Caco-2 (cell line): ENCODE measurements at regions of chr16 and their contacts with region 1.

Region 1: DNA sequence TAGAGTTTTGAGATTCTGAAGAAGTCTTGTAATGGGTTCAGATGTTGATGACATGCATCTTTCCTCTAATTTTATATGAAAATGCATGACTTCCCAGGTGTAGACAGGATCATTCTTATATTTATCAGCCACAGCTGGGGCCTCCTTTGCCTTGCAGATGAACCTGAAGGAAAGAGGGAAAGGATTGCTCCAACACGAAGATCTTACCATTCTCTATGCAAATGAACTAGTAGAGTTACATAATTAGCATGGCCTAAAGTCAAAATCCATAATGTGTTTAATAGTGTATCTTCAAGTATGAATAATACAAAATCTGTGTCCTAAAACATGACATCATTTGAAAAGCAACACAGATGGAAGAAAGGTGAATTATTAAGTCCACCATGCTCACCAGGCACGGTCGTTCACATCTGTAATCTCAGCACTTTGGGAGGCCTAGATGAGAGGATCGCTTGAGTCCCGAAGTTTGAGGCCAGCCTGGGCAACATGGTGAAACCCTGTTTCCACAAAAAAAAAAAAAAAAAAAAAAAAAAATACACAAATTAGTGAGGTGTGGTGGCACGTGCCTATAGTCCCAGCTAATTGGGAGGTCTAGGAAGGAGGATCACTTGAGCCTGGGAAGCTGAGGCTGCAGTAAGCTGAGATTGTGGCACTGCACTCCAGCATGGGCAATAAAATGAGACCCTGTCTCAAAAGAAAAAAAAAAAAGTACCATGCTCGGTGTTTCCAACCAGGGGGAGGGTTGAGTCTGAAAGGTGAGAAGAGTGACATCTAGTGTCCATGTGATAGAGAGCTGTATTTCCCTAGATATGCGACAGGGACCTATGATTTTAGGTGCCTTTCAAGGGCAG is 6.3 kb downstream of the VWA3A start:
- DNase-seq: peak in 1 of 2 experiments; percentile 61
- H3K4me3 ChIP-seq: no peak overlapping the region
- H3K4me3 Mint-ChIP-seq: peak overlapping the region; percentile 42
- H3K27ac Mint-ChIP-seq: no peak overlapping the region
- H3K4me1 ChIP-seq: no peaks in the 10 kb centered on the region
- H3K4me1 Mint-ChIP-seq: no peaks in the 10 kb centered on the region
- H3K27me3 ChIP-seq: no peaks in the 10 kb centered on the region
- H3K27me3 Mint-ChIP-seq: peaks cover 3% of the 10 kb centered on the region
- CTCF ChIP-seq: peak; percentile 50 to 77

Region 2: DNA sequence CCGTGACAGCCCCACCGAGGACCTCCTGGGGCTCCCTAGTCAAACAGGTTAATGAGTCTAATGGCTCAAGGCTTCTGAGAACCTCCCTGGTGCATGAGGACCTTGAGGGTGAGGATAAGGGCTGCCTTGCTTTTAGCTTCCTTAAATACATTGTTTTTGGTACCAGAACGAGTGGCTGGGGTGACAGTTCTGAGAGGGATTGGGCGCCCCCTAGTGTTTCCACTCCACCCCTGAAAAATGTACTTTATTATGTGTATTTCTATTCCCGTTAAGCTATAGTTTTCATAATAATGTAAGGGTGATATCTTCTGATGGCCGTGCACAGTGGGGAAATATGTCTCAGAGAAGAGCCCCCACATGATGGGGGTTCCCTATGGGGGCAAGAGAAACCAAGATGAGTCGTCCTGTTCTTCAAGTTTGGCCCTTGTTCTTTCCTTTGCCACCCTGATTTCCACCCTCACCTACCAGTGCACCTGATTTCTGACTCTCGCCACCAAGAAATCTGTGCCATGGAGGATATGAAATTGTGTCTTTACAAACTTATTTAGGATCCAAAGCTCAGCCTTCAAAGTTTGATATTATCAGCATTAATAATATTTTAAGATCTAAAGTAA is 20.8 kb before region 1 on chr16:
- CTCF ChIA-PET with region 1: interaction called, 18 read pairs
- POLR2A ChIA-PET with region 1: no interaction called
- intact Hi-C with region 1: no loop called
- DNase-seq: peak; percentile 49 to 70
- H3K4me3 ChIP-seq: no peak overlapping the region
- H3K4me3 Mint-ChIP-seq: no peak overlapping the region
- H3K27ac Mint-ChIP-seq: no peak overlapping the region
- H3K4me1 ChIP-seq: no peaks in the 10 kb centered on the region
- H3K4me1 Mint-ChIP-seq: no peaks in the 10 kb centered on the region
- H3K27me3 ChIP-seq: no peaks in the 10 kb centered on the region
- H3K27me3 Mint-ChIP-seq: no peaks in the 10 kb centered on the region
- CTCF ChIP-seq: peak; percentile 81 to 83

Region 3: DNA sequence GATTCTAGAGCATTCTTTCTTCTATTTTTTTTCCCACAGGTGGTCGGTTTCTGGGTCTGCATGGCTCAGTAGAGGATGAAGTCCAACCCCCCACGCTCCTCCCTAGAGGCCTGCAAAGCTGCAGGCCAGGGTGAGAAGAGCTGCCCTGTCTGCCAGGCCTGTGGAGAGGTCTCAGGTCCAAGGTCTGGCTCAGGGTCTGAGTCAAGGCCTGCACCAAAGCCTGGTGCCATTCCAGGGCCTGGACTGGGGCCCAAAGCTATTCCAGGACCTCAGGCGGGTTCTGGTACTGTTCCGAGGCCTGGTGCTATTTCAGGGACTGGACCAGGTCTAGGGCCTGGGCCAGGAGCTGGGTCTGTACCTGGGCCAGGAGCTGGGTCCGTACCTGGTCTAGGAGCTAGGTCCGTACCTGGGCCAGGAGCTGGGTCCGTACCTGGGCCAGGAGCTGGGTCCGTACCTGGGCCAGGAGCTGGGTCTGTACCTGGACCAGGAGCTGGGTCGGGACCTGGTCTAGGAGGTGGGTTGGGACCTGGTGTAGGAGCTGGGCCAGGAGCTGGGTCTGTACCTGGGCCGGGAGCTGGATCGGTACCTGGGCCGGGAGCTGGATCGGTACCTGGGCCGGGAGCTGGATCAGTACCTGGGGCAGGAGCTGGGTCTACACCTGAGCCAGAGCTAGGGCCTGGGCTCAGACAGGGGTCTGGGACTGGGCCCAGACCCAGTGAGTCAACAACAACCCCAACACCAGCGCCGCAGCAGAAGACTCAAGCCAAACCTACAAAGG is 67.1 kb after region 1 on chr16:
- CTCF ChIA-PET with region 1: no interaction called
- POLR2A ChIA-PET with region 1: no interaction called
- intact Hi-C with region 1: no loop called
- DNase-seq: no peak
- H3K4me3 ChIP-seq: no peak overlapping the region
- H3K4me3 Mint-ChIP-seq: no peak overlapping the region
- H3K27ac Mint-ChIP-seq: no peak overlapping the region
- H3K4me1 ChIP-seq: no peaks in the 10 kb centered on the region
- H3K4me1 Mint-ChIP-seq: no peaks in the 10 kb centered on the region
- H3K27me3 ChIP-seq: no peaks in the 10 kb centered on the region; the same call in 1 of the 2 replicates
- H3K27me3 Mint-ChIP-seq: peaks cover 6% of the 10 kb centered on the region
- CTCF ChIP-seq: no peak